ENCODE measurements at regions of chr9 and their contacts with region 1.

Region 1: DNA sequence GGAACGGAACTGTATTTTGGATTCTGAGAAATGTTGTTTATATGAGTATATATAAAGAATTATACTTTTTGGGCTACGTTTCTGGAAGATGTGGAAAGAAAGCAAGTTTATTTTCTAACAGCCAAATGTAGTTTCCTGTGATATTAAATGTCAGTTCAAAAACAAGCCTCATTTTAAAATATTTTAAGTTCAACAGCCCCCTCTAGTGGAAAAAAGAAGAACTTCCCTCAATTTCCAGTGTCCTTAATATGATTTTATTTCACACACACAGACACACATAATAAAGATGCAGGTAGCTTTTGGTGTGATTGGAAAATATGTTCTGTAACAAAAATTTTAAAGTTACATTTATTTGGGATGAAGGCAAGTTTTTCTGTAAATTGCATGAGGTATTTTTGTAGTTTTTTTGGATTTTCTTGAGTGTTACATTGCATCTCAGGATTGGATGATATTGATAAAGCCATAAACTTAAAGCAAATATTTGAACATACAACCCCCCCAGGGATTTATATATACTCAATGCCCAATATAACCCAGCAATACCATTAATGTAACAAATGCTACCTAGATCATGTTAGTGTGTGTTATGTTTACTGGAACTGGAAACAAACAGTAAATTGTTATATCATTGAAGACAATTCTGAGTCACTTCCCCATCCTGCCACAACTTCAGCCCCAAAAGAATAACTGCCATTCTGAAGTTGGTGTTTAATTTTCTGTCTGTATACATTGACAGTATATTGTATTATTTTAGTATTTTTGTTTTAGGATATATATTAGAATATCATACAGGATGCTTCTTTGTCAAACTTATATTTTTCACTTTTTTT is 54.0 kb downstream of the CCDC171 start:
- DNase-seq: peak; percentile 60 to 92 (median 88)
- H3K4me3 ChIP-seq: peak overlapping the region in 3 of 7 experiments; percentile 20 to 68 (median 42)
- H3K27ac ChIP-seq: peak overlapping the region; percentile 59 to 79
- H3K4me1 ChIP-seq: peaks cover 6 to 22% (median 11%) of the 10 kb centered on the region in 4 experiments
- H3K27me3 ChIP-seq: no peaks in the 10 kb centered on the region

Region 2: GRCh38 chr9:15231788-15232635 is 374.8 kb before region 1 on chr9:
- CTCF ChIA-PET with region 1: no interaction called
- POLR2A ChIA-PET with region 1: no interaction called
- DNase-seq: peak in 2 of 3 donors; percentile 10 to 14
- H3K4me3 ChIP-seq: no peak overlapping the region
- H3K27ac ChIP-seq: no peak overlapping the region
- H3K4me1 ChIP-seq: no peaks in the 10 kb centered on the region
- H3K27me3 ChIP-seq: no peaks in the 10 kb centered on the region

Region 3: DNA sequence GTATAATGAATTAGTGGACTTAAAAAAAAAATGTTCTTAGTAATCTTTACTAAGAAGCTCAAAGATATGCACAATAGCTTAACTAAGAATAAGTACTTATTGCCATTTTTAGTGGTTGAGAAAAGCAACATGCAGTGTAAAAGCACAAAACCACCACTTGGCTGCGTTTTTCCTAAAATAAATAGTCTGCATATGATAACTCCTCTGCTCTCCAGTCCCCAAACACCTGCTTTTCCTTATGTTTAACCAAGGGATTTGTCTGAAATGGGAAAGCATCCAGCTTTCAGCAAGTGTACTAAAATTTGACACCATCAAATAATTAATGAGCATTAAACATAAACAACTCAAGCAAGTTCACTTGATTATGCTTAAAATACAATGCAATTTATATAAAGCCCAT is 137.5 kb before region 1 on chr9:
- CTCF ChIA-PET with region 1: interaction called, 19 read pairs
- POLR2A ChIA-PET with region 1: no interaction called
- DNase-seq: peak in 2 of 3 donors; percentile 11 to 13
- H3K4me3 ChIP-seq: no peak overlapping the region
- H3K27ac ChIP-seq: no peak overlapping the region
- H3K4me1 ChIP-seq: no peaks in the 10 kb centered on the region
- H3K27me3 ChIP-seq: no peaks in the 10 kb centered on the region

Region 4: DNA sequence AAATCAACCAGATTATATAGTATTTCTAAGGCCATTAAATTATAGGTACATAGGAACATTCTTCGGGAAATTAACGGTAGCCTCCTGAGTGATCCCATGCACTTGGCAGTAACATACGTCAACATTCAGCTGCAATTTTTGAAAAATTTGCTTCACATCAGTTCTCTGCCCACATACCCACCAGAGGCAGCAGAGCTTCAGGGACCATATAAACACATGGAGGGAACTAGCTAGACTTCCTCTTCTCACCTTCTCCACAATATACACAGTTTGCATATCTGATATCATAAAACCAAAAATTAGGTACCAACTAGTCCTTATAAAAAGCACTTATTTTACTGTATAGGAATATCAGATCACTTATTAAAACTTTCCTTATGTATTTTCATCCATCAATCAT is 100.9 kb before region 1 on chr9:
- CTCF ChIA-PET with region 1: interaction called, 10 read pairs
- POLR2A ChIA-PET with region 1: interaction called, 3 read pairs
- DNase-seq: peak; percentile 60 to 79 (median 77)
- H3K4me3 ChIP-seq: no peak overlapping the region
- H3K27ac ChIP-seq: no peak overlapping the region
- H3K4me1 ChIP-seq: peaks cover 9 to 37% (median 16%) of the 10 kb centered on the region in 4 experiments
- H3K27me3 ChIP-seq: no peaks in the 10 kb centered on the region

Region 5: GRCh38 chr9:15552636-15553527 is 54.0 kb before region 1 on chr9 and contains the start of gene CCDC171:
- CTCF ChIA-PET with region 1: interaction called, 33 read pairs
- POLR2A ChIA-PET with region 1: interaction called, 3 read pairs
- DNase-seq: peak; percentile 99 to 100 (median 99)
- H3K4me3 ChIP-seq: peak within 1 kb of the TSS; percentile 87 to 99 (median 98)
- H3K27ac ChIP-seq: peak within 1 kb of the TSS; percentile 80 to 91
- H3K4me1 ChIP-seq: peaks cover 2 to 28% (median 15%) of the 10 kb centered on the region in 4 experiments
- H3K27me3 ChIP-seq: no peaks in the 10 kb centered on the region

Region 6: GRCh38 chr9:15578714-15579113 is 28.1 kb before region 1 on chr9:
- CTCF ChIA-PET with region 1: no interaction called
- POLR2A ChIA-PET with region 1: no interaction called
- DNase-seq: no peak
- H3K4me3 ChIP-seq: no peak overlapping the region
- H3K27ac ChIP-seq: no peak overlapping the region
- H3K4me1 ChIP-seq: no peaks in the 10 kb centered on the region
- H3K27me3 ChIP-seq: no peaks in the 10 kb centered on the region

Region 7: DNA sequence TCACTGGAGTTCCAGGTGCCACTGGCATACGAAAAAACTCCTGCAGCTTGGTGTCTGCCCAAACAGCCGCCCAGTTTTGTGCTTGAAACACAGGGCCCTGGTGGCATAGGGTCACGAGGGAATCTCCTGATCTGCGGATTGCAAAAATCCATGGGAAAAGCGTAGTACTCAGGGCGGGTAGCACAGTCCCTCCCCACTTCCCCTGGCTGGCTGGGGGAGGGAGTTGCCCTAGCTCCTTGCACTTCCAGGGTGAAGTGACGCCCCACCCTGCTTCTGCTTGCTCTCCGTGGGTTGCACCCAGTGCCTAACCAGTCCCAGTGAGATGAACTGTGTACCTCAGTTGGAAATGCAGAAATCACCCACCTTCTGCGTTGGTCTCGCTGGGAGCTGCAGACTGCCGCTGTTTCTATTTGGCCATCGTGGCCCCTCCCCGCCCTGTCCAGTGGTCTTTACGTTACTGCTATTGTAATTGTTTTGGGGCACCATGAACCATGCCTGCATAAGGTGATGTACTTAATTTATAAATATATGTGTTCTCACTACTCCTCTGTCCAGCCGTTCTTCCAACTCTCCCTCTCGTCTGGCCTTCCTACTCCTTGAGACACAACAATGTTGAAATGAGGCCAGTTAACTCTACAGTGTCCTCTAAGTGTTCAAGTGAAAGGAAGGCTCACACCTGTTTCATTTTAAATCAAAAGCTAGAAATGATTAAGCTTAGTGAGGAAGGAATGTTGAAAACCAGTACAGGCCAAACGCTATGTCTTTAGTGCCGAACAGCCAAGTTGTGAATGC is 11.9 kb after region 1 on chr9:
- CTCF ChIA-PET with region 1: interaction called, 14 read pairs
- POLR2A ChIA-PET with region 1: interaction called, 3 read pairs
- DNase-seq: no peak
- H3K4me3 ChIP-seq: no peak overlapping the region
- H3K27ac ChIP-seq: no peak overlapping the region
- H3K4me1 ChIP-seq: no peaks in the 10 kb centered on the region
- H3K27me3 ChIP-seq: no peaks in the 10 kb centered on the region

Region 8: DNA sequence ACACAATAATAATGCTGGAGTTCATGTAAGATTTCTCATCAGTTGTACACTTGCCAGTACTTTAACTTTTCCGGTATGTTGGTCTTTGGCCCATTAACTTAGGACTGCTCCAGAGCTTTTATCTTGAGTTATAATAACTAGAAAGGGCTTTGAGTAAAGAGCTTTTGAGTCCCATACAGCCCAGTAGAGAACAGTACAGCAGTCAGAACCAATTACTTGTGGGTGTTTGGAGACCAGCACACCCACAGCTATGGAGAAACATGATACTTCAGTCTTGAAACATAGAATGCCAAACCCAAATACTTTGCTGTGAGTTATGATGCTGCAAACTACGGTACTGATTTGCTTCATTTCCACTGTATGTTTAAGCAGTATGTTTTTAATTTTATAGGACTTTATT is 320.3 kb after region 1 on chr9:
- CTCF ChIA-PET with region 1: no interaction called
- POLR2A ChIA-PET with region 1: no interaction called
- DNase-seq: no peak
- H3K4me3 ChIP-seq: no peak overlapping the region
- H3K27ac ChIP-seq: no peak overlapping the region
- H3K4me1 ChIP-seq: no peaks in the 10 kb centered on the region
- H3K27me3 ChIP-seq: no peaks in the 10 kb centered on the region

Measured in common myeloid progenitor, CD34-positive (primary cell).